ENCODE measurements at regions of chr14 and their contacts with region 1.

Region 1: GRCh38 chr14:63666349-63667079 is 24.8 kb upstream of the WDR89 start:
- DNase-seq: no peak
- H3K4me3 Mint-ChIP-seq: no peak overlapping the region
- H3K27ac Mint-ChIP-seq: no peak overlapping the region
- H3K4me1 Mint-ChIP-seq: no peaks in the 10 kb centered on the region
- H3K27me3 Mint-ChIP-seq: no peaks in the 10 kb centered on the region

Region 2: GRCh38 chr14:63678538-63678937 is 12.0 kb after region 1 on chr14:
- CTCF ChIA-PET with region 1: interaction called, 5 read pairs
- POLR2A ChIA-PET with region 1: interaction called, 10 read pairs
- DNase-seq: no peak
- H3K4me3 Mint-ChIP-seq: no peak overlapping the region
- H3K27ac Mint-ChIP-seq: no peak overlapping the region
- H3K4me1 Mint-ChIP-seq: no peaks in the 10 kb centered on the region
- H3K27me3 Mint-ChIP-seq: no peaks in the 10 kb centered on the region